ENCODE measurements at regions of chr6 and their contacts with region 1.

Region 1: GRCh38 chr6:153032255-153032882 is 29.9 kb upstream of the MTRF1L start:
- DNase-seq: no peak
- ATAC-seq: no peak
- H3K4me3 ChIP-seq: no peak overlapping the region
- H3K27ac ChIP-seq: no peak overlapping the region
- H3K4me1 ChIP-seq: no peaks in the 10 kb centered on the region
- H3K27me3 ChIP-seq: no peaks in the 10 kb centered on the region
- CTCF ChIP-seq: peak in 7 of 9 donors; percentile 29 to 63 (median 55)

Region 2: DNA sequence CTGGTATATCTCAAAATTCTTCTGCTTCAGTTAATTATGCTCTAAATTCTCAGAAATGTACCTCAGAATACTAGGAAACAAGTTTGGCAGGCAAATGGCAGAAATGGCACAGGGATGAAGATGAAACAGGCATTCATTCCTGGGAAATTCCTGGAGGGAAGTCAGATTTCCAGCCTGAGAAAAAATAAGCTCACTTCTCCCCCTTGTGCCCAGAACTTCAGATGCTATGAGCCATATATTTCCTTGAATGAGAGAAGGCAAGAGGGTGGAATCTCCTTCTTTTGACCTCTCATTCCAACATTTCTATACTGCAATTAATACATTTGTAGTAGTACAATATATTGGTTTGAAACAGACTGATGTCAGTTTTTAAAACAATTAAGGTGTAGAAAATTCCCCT is 75.9 kb after region 1 on chr6:
- intact Hi-C with region 1: loop called in 2 of 10 experiments (anchors 5 to 10 kb)
- DNase-seq: no peak
- ATAC-seq: no peak
- H3K4me3 ChIP-seq: no peak overlapping the region
- H3K27ac ChIP-seq: no peak overlapping the region
- H3K4me1 ChIP-seq: peaks cover 0 to 12% (median 5%) of the 10 kb centered on the region in 9 donors
- H3K27me3 ChIP-seq: no peaks in the 10 kb centered on the region
- CTCF ChIP-seq: peak in 5 of 9 donors; percentile 25 to 41 (median 34)

Region 3: GRCh38 chr6:153511896-153512496 is 479.6 kb after region 1 on chr6:
- intact Hi-C with region 1: loop called in 8 of 10 experiments (anchors 5 to 10 kb)
- DNase-seq: no peak
- ATAC-seq: peak in 2 of 8 donors; percentile 35 to 51
- H3K4me3 ChIP-seq: no peak overlapping the region
- H3K27ac ChIP-seq: no peak overlapping the region
- H3K4me1 ChIP-seq: peaks cover 0 to 3% (median 0%) of the 10 kb centered on the region in 9 donors
- H3K27me3 ChIP-seq: no peaks in the 10 kb centered on the region
- CTCF ChIP-seq: peak; percentile 36 to 72 (median 62)

Region 4: DNA sequence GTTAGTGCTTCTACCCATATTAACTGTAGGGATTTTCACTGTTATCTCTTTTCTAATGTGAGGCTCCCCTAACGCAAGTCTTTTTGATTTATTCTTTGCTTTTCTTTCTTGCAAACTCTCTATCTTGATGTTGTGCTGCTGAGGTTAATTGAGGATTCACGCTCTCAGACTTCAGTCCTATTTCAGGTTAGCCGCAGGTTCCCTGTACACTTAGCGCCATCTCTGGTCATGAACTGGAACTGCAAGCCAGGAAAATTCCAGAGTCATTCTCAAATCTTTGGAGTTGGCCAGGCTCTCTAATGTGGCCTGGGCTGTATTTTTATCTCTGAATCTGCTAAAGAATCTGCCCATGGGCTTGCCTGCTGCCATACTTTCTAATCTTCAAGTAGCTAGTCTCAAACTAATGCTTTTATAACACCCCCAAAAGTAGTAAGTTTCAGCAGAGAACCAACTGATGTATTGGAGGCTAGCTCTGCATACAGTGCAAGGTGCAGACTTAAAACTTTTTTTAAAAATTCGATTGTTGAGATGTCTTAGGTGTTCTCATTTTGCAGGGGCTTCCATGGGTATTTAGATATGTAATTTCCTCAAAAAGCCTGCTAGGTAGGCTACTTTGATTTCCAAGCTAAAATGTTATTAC is 915.6 kb after region 1 on chr6:
- intact Hi-C with region 1: loop called in 1 of 10 experiments (anchors 10 kb)
- DNase-seq: peak in 1 of 2 donors; percentile 8
- ATAC-seq: no peak
- H3K4me3 ChIP-seq: no peak overlapping the region
- H3K27ac ChIP-seq: no peak overlapping the region
- H3K4me1 ChIP-seq: no peaks in the 10 kb centered on the region
- H3K27me3 ChIP-seq: peaks cover 0 to 2% (median 0%) of the 10 kb centered on the region in 7 donors
- CTCF ChIP-seq: peak; percentile 47 to 91 (median 83)

Measured in heart right ventricle (tissue), 16 donors.